Esophagus squamous epithelium (tissue), 5 donors: ENCODE measurements at regions of chr9 and their contacts with region 1.

Region 1: DNA sequence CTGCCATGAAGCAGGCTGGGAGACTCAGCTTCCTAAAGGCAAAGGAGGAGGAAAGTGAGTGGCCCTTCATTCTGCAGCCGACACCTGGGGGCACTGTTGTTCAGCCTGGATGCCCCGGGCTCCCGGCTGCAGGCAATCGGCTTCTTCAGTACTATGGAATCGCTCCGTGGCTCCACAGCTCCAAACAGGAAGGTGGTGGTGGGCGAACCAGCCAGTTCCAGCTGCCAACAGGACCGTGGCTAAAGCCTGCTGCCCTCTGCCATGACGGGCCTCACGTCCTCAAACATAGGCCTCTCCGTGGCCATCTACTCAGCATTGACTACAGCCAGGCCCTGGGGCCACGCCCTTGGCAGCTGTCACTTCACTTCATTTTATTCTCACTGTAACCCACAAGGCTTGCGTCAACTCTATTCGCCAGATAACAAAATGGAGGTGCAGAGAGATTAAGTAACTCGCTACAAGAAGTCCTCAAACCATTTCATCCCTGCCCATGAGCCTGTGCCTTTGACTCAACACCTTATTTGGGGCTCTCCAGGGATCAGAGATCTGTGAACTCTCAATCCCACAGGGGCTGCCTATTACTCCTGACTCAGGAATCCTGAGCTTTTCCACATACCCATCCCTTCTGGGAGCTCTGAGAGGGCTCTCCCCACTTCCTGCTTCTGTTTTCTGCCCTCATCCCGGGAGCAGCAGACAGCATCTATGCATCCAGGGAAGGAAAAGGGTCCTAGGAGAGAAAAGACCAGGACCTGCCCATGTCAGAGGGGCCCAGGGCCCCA is 38.0 kb downstream of the PAX5 start:
- DNase-seq: no peak
- H3K4me3 ChIP-seq: peak overlapping the region in 2 of 4 donors; percentile 11 to 47
- H3K27ac ChIP-seq: no peak overlapping the region
- H3K4me1 ChIP-seq: peaks cover 0 to 2% (median 0%) of the 10 kb centered on the region in 3 donors
- H3K27me3 ChIP-seq: peaks cover 0 to 94% (median 0%) of the 10 kb centered on the region in 4 donors
- CTCF ChIP-seq: peak; percentile 12 to 60 (median 38)
- POLR2A ChIP-seq: no peak

Region 2: GRCh38 chr9:36676778-36677485 is 319.2 kb before region 1 on chr9:
- intact Hi-C with region 1: no loop called
- DNase-seq: no peak
- H3K4me3 ChIP-seq: no peak overlapping the region
- H3K27ac ChIP-seq: no peak overlapping the region
- H3K4me1 ChIP-seq: no peaks in the 10 kb centered on the region
- H3K27me3 ChIP-seq: no peaks in the 10 kb centered on the region
- CTCF ChIP-seq: no peak
- POLR2A ChIP-seq: no peak

Region 3: DNA sequence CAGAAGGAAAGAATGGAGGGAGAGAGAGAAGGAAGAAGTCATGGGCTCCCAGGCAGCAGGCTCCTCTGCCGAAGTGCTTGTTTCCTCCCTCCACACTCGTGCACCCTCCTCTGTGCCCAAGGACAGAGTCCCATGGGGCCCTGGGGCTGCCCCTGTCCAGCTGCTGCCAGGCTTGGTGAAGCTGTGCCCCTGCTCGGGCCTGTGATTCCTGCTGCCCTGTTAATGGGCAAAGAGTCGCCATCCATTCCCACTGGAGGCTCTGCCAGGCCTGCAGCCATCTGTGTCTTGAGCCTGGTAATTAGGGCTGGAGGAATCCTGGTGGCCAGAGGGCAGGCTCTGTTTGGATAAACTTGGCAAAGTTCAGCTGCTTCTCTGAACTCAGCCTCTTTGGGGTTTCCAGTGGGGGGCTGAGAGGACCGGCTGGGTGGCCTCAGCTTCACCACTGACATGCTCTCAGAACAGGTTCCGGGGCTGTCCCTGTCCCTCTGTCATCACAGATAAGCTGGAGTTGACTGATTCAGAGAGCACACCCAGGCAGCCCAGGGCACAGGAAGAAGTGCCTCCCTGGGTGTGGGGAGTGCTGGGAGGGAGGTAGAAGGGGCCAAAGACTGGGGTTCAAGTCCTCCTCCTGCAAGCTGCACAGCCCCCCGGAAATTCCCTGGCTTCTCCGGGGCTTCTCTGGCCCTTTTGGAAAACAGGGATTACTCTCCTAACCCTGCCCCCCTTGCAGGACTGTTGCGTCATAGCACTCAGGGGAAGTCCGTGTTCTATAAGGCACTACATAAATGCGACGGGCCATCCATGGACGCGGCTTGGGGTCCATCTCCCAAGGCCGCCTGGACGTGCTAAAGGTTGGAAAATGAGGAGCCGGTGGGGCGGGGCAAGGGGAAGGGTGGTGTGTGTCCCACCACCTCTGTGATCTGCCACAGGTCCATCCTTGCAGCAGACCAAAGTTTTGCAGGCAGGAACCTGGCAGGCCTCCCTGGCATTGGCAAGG is 116.8 kb before region 1 on chr9:
- intact Hi-C with region 1: loop called (anchors 5 kb)
- DNase-seq: no peak
- H3K4me3 ChIP-seq: no peak overlapping the region
- H3K27ac ChIP-seq: no peak overlapping the region
- H3K4me1 ChIP-seq: no peaks in the 10 kb centered on the region
- H3K27me3 ChIP-seq: peaks cover 0 to 60% (median 0%) of the 10 kb centered on the region in 4 donors
- CTCF ChIP-seq: no peak
- POLR2A ChIP-seq: no peak

Region 4: GRCh38 chr9:36903541-36904435 is 92.3 kb before region 1 on chr9:
- intact Hi-C with region 1: no loop called
- DNase-seq: no peak
- H3K4me3 ChIP-seq: no peak overlapping the region
- H3K27ac ChIP-seq: no peak overlapping the region
- H3K4me1 ChIP-seq: no peaks in the 10 kb centered on the region
- H3K27me3 ChIP-seq: peaks cover 0 to 68% (median 0%) of the 10 kb centered on the region in 4 donors
- CTCF ChIP-seq: no peak
- POLR2A ChIP-seq: no peak

Region 5: GRCh38 chr9:37364751-37365360 is 368.7 kb after region 1 on chr9:
- intact Hi-C with region 1: loop called (anchors 10 kb)
- DNase-seq: no peak
- H3K4me3 ChIP-seq: no peak overlapping the region
- H3K27ac ChIP-seq: no peak overlapping the region
- H3K4me1 ChIP-seq: no peaks in the 10 kb centered on the region
- H3K27me3 ChIP-seq: no peaks in the 10 kb centered on the region
- CTCF ChIP-seq: no peak
- POLR2A ChIP-seq: no peak